ENCODE measurements at regions of chr7 and their contacts with region 1.

Region 1: DNA sequence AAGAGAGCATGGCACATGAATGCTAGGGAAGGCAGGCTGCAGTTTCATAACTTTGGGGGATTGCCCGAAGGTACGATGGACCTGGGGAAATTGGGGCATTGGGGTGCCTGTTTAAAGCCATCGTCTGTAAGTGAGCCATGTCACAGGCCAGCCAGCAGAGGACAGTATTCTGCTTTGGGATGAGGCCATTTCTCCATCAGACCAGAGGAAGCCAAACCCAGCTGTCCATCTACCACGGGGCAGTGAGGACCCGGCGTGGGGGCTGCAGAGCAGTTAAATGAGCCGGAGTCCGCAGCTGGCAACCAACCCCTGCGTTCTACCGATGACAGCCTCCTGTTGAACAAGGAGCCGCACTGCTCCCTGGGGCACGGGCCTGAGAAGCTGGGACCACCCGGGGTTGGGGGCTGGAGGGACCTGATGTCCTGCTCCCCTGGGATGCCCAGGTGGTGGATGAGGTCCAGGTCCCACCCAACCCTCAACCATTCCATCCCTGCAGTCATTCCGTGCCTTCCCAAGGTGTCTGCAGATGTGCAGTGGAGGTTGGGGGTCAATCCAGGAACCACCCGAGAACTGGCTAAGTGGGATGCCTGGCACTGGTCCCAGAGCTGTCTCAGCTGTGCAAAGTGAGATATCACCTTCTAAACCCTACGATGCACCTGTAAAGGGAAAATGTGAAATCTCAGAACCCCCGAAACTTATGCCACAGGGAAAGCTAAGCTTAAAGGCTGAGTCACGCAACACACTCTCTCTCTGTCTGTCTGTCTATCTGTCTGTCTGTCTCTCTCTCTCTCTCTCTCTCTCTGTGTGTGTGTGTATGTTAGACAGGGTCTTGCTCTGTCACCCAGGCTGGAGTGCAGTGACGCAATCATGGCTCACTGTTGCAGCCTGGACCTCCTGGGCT is 12.1 kb upstream of the RHBDD2 start:
- DNase-seq: peak; percentile 84
- CTCF ChIP-seq: peak; percentile 95

Region 2: GRCh38 chr7:75789361-75789924 is 77.3 kb before region 1 on chr7:
- CTCF ChIA-PET with region 1: no interaction called
- POLR2A ChIA-PET with region 1: no interaction called
- DNase-seq: no peak
- CTCF ChIP-seq: no peak

Region 3: DNA sequence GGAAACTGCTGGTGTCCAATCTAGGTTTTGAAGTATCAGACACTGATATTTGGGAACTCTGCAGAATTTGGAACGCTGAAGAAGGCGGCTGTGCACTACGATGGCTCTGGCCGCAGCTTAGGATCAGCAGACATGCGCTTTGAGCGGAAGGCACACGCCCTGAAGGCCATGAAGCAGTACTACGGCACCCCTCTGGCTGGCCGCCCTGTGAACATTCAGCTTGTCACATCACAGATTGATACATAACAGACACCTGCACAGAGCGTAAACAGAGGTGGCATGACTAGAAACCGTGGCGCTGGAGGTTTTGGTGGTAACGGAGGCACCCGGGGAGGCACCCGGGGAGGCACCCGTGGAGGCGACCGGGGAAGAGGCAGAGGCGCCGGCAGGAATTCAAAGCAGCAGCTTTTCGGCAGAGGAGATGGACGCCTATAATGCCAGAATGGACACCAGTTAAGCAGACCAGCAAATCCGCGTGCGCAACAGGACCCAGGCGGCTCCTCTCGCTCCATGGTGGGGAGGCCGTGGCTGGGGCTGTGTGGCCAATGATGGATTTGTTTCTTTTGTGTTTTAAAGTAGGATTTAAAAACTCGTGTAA is 31.0 kb before region 1 on chr7:
- CTCF ChIA-PET with region 1: no interaction called
- POLR2A ChIA-PET with region 1: no interaction called
- DNase-seq: no peak
- CTCF ChIP-seq: no peak

Region 4: GRCh38 chr7:75854233-75854632 is 12.5 kb before region 1 on chr7:
- CTCF ChIA-PET with region 1: no interaction called
- POLR2A ChIA-PET with region 1: no interaction called
- DNase-seq: no peak
- CTCF ChIP-seq: no peak

Region 5: DNA sequence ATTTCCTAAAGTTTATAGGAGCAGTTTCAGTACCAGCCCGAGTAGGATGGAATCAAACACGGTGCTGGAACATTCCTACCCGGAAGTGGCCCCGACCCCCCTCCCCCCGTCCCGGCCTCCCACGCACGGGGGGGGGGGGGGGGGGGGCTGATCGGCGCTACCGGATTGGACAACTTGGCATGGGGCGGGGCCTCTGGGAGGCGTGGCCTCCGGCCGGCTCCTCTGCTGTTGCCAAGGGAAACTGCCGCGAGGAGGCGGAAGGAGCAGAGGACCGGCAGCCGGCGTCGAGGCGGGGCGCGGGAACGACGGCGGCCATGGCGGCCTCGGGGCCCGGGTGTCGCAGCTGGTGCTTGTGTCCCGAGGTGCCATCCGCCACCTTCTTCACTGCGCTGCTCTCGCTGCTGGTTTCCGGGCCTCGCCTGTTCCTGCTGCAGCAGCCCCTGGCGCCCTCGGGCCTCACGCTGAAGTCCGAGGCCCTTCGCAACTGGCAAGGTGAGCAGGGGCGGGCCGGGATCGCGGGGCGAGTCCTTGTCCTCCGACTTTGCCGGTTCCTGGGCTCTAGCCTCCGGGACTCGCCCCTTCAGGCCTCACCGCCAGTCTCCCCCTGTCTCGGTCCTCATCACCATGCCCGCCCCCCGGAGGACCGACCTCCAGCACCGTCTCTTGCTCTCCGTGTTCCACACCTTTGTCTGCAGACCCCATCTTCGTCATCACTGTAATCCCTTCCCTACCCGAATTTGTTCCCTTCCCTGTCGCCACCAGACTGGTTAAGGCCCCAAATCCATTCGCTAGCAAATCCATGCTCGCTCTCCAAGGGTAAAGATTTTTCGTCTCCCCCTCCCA is 12.3 kb after region 1 on chr7 and contains the start of gene RHBDD2:
- CTCF ChIA-PET with region 1: interaction called, 18 read pairs
- POLR2A ChIA-PET with region 1: no interaction called
- DNase-seq: peak; percentile 100
- CTCF ChIP-seq: no peak

Region 6: DNA sequence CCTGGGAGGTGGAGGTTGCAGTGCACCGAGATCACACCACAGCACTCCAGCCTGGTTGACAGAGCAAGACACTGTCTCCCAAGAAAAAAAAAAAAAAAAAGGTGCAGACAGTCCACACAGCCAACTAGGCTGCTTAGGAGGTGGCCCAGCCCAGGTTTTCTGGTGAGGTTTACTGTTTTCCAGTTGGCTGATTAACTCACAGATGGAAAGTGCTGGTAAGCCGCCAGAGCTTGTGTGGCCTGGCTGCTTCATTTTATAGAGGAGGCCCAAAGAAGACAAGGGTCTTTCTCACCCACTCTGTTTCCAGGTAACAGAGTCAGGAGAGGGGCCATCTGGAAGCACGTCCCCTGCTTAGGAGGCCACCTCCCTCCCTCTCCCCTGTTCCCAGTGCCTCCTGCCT is 18.3 kb after region 1 on chr7:
- CTCF ChIA-PET with region 1: interaction called, 12 read pairs
- POLR2A ChIA-PET with region 1: no interaction called
- DNase-seq: no peak
- CTCF ChIP-seq: no peak